ENCODE measurements at regions of chr14 and their contacts with region 1.

Region 1: GRCh38 chr14:96225745-96226151 is 21.1 kb downstream of the BDKRB2 start:
- DNase-seq: peak; percentile 54
- H3K4me3 ChIP-seq: no peak overlapping the region
- H3K27ac ChIP-seq: peak overlapping the region; percentile 71
- H3K4me1 ChIP-seq: peaks cover 31% of the 10 kb centered on the region
- H3K27me3 ChIP-seq: no peaks in the 10 kb centered on the region
- CTCF ChIP-seq: peak; percentile 29 to 50

Region 2: DNA sequence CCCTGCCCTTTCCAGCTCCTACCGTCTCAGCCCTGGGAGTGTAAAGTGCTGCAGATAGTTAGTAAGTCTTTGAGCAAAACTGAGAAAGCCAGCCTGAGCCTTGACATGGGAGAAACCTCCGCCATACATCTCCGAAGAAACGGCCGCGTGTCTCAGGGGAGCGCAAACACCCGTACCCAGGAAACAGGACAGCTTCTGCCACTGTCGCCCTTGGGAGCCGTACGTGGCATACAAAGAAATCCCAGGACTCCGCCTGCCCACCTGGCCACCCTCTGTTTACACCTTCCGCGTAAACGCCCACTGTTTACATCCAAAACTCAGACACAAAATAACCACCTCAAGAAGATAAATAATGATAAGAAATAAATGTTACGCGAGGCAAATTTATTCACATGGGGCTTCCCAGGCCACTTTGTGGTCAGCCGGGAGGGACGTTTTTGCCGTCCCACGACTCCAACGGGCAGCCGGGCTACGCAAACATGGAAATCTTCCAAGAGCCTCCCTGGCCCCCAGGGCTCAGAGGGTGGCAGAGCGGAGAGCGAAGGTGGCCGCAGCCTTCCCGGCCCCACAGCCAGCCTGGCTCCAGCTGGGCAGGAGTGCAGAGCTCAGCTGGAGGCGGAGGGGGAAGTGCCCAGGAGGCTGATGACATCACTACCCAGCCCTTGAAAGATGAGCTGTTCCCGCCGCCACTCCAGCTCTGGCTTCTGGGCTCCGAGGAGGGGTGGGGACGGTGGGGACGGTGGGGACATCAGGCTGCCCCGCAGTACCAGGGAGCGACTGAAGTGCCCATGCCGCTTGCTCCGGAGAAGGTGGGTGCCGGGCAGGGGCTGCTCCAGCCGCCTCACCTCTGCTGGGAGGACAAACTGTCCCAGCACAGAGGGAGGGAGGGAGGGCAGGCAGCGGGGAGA is 21.3 kb before region 1 on chr14 and contains the start of gene BDKRB2:
- CTCF ChIA-PET with region 1: no interaction called
- dilution Hi-C with region 1: no loop called
- in situ Hi-C with region 1: no loop called
- intact Hi-C with region 1: loop called (anchors 1 kb)
- DNase-seq: peak; percentile 85
- H3K4me3 ChIP-seq: peak within 1 kb of the TSS; percentile 44 to 68 (median 65)
- H3K27ac ChIP-seq: peak within 1 kb of the TSS; percentile 75
- H3K4me1 ChIP-seq: peaks cover 42% of the 10 kb centered on the region
- H3K27me3 ChIP-seq: no peaks in the 10 kb centered on the region
- CTCF ChIP-seq: no peak
- total RNA-seq, gene BDKRB2: 7.5 to 21.1 TPM

Region 3: GRCh38 chr14:96246535-96246839 is 20.7 kb after region 1 on chr14:
- CTCF ChIA-PET with region 1: interaction called, 5 read pairs
- dilution Hi-C with region 1: no loop called
- in situ Hi-C with region 1: no loop called
- intact Hi-C with region 1: loop called (anchors 2 kb)
- DNase-seq: peak; percentile 91
- H3K4me3 ChIP-seq: no peak overlapping the region
- H3K27ac ChIP-seq: no peak overlapping the region
- H3K4me1 ChIP-seq: peaks cover 26% of the 10 kb centered on the region
- H3K27me3 ChIP-seq: no peaks in the 10 kb centered on the region
- CTCF ChIP-seq: peak in 1 of 2 donors; percentile 17

Region 4: GRCh38 chr14:96255501-96256366 is 30.0 kb after region 1 on chr14 and contains the start of gene BDKRB1:
- CTCF ChIA-PET with region 1: interaction called, 10 read pairs
- dilution Hi-C with region 1: no loop called
- in situ Hi-C with region 1: no loop called
- intact Hi-C with region 1: no loop called
- DNase-seq: peak; percentile 56
- H3K4me3 ChIP-seq: no peak within 1 kb of the TSS
- H3K27ac ChIP-seq: peak within 1 kb of the TSS; percentile 34
- H3K4me1 ChIP-seq: peaks cover 31% of the 10 kb centered on the region
- H3K27me3 ChIP-seq: no peaks in the 10 kb centered on the region
- CTCF ChIP-seq: no peak
- total RNA-seq, gene BDKRB1: 0.17 to 4.8 TPM

Region 5: GRCh38 chr14:96268431-96269358 is 42.9 kb after region 1 on chr14:
- CTCF ChIA-PET with region 1: no interaction called
- dilution Hi-C with region 1: no loop called
- in situ Hi-C with region 1: no loop called
- intact Hi-C with region 1: loop called (anchors 2 kb)
- DNase-seq: peak; percentile 99
- H3K4me3 ChIP-seq: no peak overlapping the region
- H3K27ac ChIP-seq: peak overlapping the region; percentile 78
- H3K4me1 ChIP-seq: peaks cover 46% of the 10 kb centered on the region
- H3K27me3 ChIP-seq: no peaks in the 10 kb centered on the region
- CTCF ChIP-seq: no peak

Region 6: DNA sequence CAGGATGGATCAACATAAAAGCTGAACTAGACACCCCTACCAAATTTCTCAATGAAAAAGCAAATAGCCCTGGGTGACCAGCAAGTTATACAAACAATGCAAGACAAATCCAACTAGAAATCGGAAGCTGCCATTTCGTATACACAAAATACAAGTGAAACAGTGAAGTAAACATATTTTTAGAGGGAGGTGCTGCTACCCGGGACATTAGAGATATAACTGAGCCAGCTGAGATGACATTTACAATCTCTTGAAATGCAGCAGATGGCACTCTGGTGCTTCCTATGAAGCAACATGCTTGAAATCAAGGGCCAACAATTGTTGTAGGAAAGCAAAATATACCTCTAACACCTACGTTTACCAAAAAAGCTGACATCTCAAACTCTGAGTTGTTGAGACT is 55.7 kb after region 1 on chr14:
- CTCF ChIA-PET with region 1: no interaction called
- dilution Hi-C with region 1: loop called (anchors 5 kb)
- in situ Hi-C with region 1: no loop called
- intact Hi-C with region 1: no loop called
- DNase-seq: no peak
- H3K4me3 ChIP-seq: no peak overlapping the region
- H3K27ac ChIP-seq: no peak overlapping the region
- H3K4me1 ChIP-seq: no peaks in the 10 kb centered on the region
- H3K27me3 ChIP-seq: no peaks in the 10 kb centered on the region
- CTCF ChIP-seq: no peak

Region 7: GRCh38 chr14:96309896-96310330 is 84.2 kb after region 1 on chr14:
- CTCF ChIA-PET with region 1: no interaction called
- dilution Hi-C with region 1: no loop called
- in situ Hi-C with region 1: no loop called
- intact Hi-C with region 1: no loop called
- DNase-seq: no peak
- H3K4me3 ChIP-seq: no peak overlapping the region
- H3K27ac ChIP-seq: no peak overlapping the region
- H3K4me1 ChIP-seq: peaks cover 2% of the 10 kb centered on the region
- H3K27me3 ChIP-seq: no peaks in the 10 kb centered on the region
- CTCF ChIP-seq: no peak